HCT116 (cell line): ENCODE measurements at regions of chr16 and their contacts with region 1.

Region 1: DNA sequence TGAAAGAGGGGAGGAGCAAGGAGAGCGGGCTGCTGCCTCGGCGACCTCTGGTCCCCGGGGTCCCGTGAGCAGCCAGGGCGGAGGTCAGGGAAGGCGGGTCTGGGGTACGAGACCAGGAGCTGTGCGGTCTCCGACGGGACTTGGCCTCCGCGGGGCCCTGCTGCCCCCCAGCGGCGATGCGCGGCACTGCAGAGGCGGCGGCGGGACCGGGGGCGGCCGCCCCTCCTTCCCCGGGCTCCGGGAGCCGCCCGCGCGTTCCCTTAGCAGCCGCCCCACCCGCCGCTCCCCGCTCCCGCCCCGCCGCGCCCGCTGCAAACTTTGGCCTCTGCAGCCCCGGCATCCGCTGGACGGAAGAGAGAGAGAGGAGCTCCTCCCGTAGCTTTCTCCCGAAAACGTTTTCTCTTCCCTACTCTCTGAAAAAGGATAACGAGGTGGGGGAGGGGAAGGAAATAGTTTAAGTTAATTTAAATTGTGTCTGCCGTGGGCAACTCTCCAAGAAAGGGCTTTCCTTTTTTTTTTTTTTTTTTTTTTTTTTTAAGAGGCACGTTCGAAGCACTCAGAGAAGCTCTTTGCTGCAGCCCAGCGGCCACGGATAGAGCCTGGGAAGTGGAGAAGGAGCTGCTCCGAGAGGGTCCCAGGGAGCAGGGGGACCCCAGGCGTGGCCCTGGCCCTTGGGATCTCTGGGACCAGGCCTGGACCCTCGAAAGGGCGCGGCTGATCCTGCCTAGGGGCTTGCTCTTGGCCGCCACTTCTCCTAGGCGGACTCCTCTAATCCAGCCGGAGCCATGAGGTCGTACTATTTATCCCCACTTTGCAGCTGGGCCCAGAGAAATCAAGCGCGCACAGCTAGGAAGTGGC is 43.2 kb downstream of the C16orf82 start:
- DNase-seq: no peak
- ATAC-seq: peak; percentile 91
- H3K4me3 ChIP-seq: peak overlapping the region; percentile 24 to 46
- H3K27ac ChIP-seq: no peak overlapping the region
- H3K4me1 ChIP-seq: peaks cover 7 to 16% of the 10 kb centered on the region in 2 experiments
- H3K27me3 ChIP-seq: no peaks in the 10 kb centered on the region
- CTCF ChIP-seq: peak; percentile 26 to 84 (median 63); a peak in 5 of 6 replicates
- POLR2A ChIP-seq: no peak
- RAD21 ChIP-seq: peak; percentile 78

Region 2: DNA sequence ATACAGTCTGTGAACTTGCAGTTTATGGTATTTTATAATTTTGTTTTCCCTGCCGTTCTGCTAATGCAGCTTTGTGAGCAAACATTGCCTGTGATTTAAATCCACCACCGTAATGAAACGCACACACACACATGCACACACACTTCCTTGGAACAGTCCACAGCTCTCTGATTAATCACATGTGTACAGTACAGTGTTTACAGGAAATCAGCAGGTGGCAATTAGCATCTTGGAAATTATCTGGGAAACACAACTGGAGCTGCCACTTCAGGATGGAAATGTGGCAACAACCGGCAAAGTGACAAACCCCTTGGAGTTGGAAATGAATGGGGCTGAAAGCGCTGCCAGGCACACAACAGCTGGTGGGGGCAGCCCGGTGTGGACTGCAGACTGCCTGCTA is 1839.3 kb before region 1 on chr16:
- CTCF ChIA-PET with region 1: interaction called, 12 read pairs
- POLR2A ChIA-PET with region 1: no interaction called
- RAD21 ChIA-PET with region 1: no interaction called
- intact Hi-C with region 1: no loop called
- DNase-seq: no peak
- ATAC-seq: no peak
- H3K4me3 ChIP-seq: no peak overlapping the region
- H3K27ac ChIP-seq: no peak overlapping the region
- H3K4me1 ChIP-seq: no peaks in the 10 kb centered on the region
- H3K27me3 ChIP-seq: no peaks in the 10 kb centered on the region
- CTCF ChIP-seq: no peak
- POLR2A ChIP-seq: no peak
- RAD21 ChIP-seq: no peak

Region 3: DNA sequence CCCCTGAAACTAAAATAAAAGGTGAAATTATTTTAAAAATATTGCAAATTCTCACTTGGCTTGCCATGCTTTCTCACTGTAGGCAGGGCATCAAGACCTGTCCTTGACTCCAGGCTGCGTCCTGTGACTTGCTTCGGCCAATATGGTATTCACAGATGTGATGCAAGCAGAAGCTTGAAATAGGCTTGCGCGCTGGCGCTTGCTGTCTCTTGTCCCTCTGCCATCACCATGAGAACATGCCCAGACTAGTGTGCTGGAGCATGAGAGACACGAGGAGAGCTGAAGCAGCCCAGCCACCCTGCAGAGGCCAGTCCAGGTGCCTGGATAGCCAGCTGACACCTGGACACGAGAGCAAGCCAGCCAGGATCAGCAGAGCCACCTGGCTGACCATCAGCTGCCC is 1830.4 kb before region 1 on chr16:
- CTCF ChIA-PET with region 1: interaction called, 12 read pairs
- POLR2A ChIA-PET with region 1: no interaction called
- RAD21 ChIA-PET with region 1: no interaction called
- intact Hi-C with region 1: loop called (anchors 1 kb)
- DNase-seq: no peak
- ATAC-seq: no peak
- H3K4me3 ChIP-seq: no peak overlapping the region
- H3K27ac ChIP-seq: no peak overlapping the region
- H3K4me1 ChIP-seq: no peaks in the 10 kb centered on the region
- H3K27me3 ChIP-seq: peaks cover 4% of the 10 kb centered on the region
- CTCF ChIP-seq: no peak
- POLR2A ChIP-seq: no peak
- RAD21 ChIP-seq: no peak

Region 4: GRCh38 chr16:25838724-25839186 is 1271.1 kb before region 1 on chr16:
- CTCF ChIA-PET with region 1: interaction called, 6 read pairs
- POLR2A ChIA-PET with region 1: no interaction called
- RAD21 ChIA-PET with region 1: no interaction called
- intact Hi-C with region 1: loop called (anchors 2 kb)
- DNase-seq: peak; percentile 27
- ATAC-seq: peak; percentile 57
- H3K4me3 ChIP-seq: no peak overlapping the region
- H3K27ac ChIP-seq: no peak overlapping the region
- H3K4me1 ChIP-seq: no peaks in the 10 kb centered on the region
- H3K27me3 ChIP-seq: no peaks in the 10 kb centered on the region
- CTCF ChIP-seq: peak; percentile 31 to 77 (median 61); a peak in 5 of 6 replicates
- POLR2A ChIP-seq: no peak
- RAD21 ChIP-seq: peak; percentile 60

Region 5: GRCh38 chr16:26963114-26963513 is 146.8 kb before region 1 on chr16:
- CTCF ChIA-PET with region 1: interaction called, 5 read pairs
- POLR2A ChIA-PET with region 1: no interaction called
- RAD21 ChIA-PET with region 1: no interaction called
- intact Hi-C with region 1: loop called (anchors 2 kb)
- DNase-seq: peak; percentile 8
- ATAC-seq: peak; percentile 82
- H3K4me3 ChIP-seq: no peak overlapping the region
- H3K27ac ChIP-seq: no peak overlapping the region
- H3K4me1 ChIP-seq: no peaks in the 10 kb centered on the region
- H3K27me3 ChIP-seq: peaks cover 33% of the 10 kb centered on the region
- CTCF ChIP-seq: peak; percentile 17 to 67 (median 53); a peak in 4 of 6 replicates
- POLR2A ChIP-seq: no peak
- RAD21 ChIP-seq: 0 out of 2 replicates have a peak, but pooled peaks have one; percentile 23

Region 6: GRCh38 chr16:27040732-27041131 is 69.2 kb before region 1 on chr16:
- CTCF ChIA-PET with region 1: no interaction called
- POLR2A ChIA-PET with region 1: no interaction called
- RAD21 ChIA-PET with region 1: no interaction called
- intact Hi-C with region 1: no loop called
- DNase-seq: no peak
- ATAC-seq: no peak
- H3K4me3 ChIP-seq: no peak overlapping the region
- H3K27ac ChIP-seq: no peak overlapping the region
- H3K4me1 ChIP-seq: no peaks in the 10 kb centered on the region
- H3K27me3 ChIP-seq: peaks cover 4% of the 10 kb centered on the region; the same call in 1 of the 2 replicates
- CTCF ChIP-seq: no peak
- POLR2A ChIP-seq: no peak
- RAD21 ChIP-seq: no peak